B cell (primary cell): ENCODE measurements at regions of chr12 and their contacts with region 1.

Region 1: GRCh38 chr12:4648501-4649357 is at the starts of genes AKAP3 and NDUFA9:
- DNase-seq: peak; percentile 89
- ATAC-seq: peak; percentile 97
- H3K4me3 ChIP-seq: peak within 1 kb of the TSS; percentile 83 to 97 (median 90)
- H3K4me3 Mint-ChIP-seq: peak within 1 kb of the TSS; percentile 91
- H3K27ac ChIP-seq: peak within 1 kb of the TSS; percentile 62 to 83
- H3K27ac Mint-ChIP-seq: peak within 1 kb of the TSS; percentile 86
- H3K4me1 ChIP-seq: peaks cover 20 to 22% of the 10 kb centered on the region in 2 donors
- H3K4me1 Mint-ChIP-seq: peaks cover 52% of the 10 kb centered on the region
- H3K27me3 ChIP-seq: no peaks in the 10 kb centered on the region
- H3K27me3 Mint-ChIP-seq: no peaks in the 10 kb centered on the region
- CTCF ChIP-seq: no peak
- total RNA-seq, gene AKAP3: 3.8 and 4.6 TPM in 2 replicates
- total RNA-seq, gene NDUFA9: 73.3 and 74.2 TPM in 2 replicates

Region 2: DNA sequence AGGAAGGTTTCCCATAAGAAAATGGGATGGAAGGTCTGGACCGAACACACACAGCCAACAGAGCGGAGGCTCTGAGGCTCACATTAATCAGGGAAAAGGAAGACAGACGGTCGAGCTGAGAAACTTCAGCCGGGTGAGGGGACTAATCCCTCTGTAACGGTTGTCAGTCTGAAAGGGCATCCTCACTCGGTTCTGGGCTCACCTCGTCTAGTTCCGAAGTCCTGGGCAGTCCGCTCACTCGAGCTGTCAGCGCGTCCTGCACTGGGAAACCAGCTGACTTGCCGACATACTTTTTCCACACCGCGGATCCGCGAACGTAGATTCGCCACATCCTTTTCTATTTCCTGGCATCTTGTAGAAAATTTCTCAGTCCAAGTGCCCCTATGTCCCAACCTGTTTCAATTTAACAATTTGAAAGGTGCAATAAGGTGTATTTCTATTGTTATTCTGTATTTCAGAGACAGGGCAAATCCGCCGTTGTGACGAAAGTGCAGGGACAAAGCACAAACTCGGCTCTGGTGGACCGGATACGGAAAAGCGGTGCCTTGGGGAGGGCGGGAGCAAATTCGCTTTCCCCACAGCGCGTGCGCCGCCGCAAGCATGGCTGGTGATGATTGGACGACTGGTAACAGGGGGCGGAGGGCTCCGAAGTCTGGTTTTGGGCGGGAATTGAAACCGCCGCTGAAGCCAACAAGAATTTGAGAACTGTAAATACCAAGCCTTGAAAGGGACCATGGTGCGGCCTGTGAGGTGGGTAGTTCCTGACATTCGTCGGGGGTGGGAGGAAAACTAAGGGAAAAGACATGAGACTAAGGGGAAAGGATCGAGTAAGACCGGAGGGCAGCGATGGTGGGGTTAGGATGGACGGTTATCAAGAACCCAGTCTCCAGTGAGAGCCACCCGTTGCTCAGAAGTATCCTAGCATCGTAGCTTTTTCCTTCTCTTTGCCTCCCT is 110.2 kb before region 1 on chr12 and contains the start of gene RAD51AP1:
- CTCF ChIA-PET with region 1: no interaction called
- POLR2A ChIA-PET with region 1: no interaction called
- intact Hi-C with region 1: loop called (anchors 1 kb)
- DNase-seq: peak; percentile 98
- ATAC-seq: peak; percentile 98
- H3K4me3 ChIP-seq: peak within 1 kb of the TSS; percentile 92 to 100 (median 99)
- H3K4me3 Mint-ChIP-seq: peak within 1 kb of the TSS; percentile 95
- H3K27ac ChIP-seq: peak within 1 kb of the TSS; percentile 94 to 99
- H3K27ac Mint-ChIP-seq: peak within 1 kb of the TSS; percentile 97
- H3K4me1 ChIP-seq: peaks cover 8 to 20% of the 10 kb centered on the region in 2 donors
- H3K4me1 Mint-ChIP-seq: peaks cover 35% of the 10 kb centered on the region
- H3K27me3 ChIP-seq: no peaks in the 10 kb centered on the region
- H3K27me3 Mint-ChIP-seq: no peaks in the 10 kb centered on the region
- CTCF ChIP-seq: no peak
- total RNA-seq, gene RAD51AP1: 3.4 and 4.6 TPM in 2 replicates

Region 3: DNA sequence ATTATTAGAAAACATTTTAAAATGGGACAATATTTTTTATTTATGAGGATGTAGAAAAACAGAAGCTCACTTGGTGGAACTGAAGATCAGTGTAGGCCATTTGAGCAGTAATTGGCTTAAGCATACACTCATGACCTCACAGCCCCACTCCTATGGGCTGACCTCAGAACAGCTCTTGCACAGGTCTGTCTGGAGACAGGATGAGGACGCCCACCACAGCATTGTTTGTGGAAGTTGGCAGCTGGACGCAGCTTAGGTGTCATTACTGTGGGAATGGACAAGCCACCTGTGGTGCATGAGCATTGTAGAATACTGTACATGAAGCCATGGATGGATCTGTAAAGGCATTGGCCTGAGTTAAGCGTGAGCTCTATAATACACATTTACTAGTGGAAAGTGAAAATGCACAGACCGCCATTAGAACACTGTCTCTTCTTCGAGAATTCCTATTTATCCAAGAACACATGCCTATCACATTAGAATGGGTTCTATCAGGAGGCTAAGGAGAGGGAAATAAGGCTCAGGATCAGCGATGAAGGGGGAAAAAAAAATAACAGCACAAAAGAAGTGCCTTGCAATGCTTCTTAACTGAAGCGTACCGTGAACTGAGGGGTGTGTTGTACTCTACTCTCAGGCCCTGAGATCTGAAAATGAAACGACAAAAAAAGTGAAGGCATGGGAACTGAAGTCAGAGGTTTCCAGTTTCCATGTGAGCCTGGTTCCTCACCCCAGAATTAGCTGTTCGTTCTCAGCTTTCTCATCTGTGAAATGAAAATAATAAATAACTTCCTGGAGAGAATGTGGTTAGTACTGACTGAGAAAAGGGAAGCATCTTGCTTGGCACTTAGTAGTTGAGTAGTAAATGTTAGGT is 294.6 kb after region 1 on chr12:
- CTCF ChIA-PET with region 1: no interaction called
- POLR2A ChIA-PET with region 1: no interaction called
- intact Hi-C with region 1: no loop called
- DNase-seq: peak; percentile 34
- ATAC-seq: no peak
- H3K4me3 ChIP-seq: no peak overlapping the region
- H3K4me3 Mint-ChIP-seq: no peak overlapping the region
- H3K27ac ChIP-seq: no peak overlapping the region
- H3K27ac Mint-ChIP-seq: no peak overlapping the region
- H3K4me1 ChIP-seq: peaks cover 15 to 19% of the 10 kb centered on the region in 2 donors
- H3K4me1 Mint-ChIP-seq: peaks cover 19% of the 10 kb centered on the region
- H3K27me3 ChIP-seq: peaks cover 0 to 10% (median 3%) of the 10 kb centered on the region in 4 experiments
- H3K27me3 Mint-ChIP-seq: peaks cover 1% of the 10 kb centered on the region
- CTCF ChIP-seq: no peak